K562 (cell line): ENCODE measurements at regions of chr12 and their contacts with region 1.

Region 1: GRCh38 chr12:28130625-28131598 is 59.3 kb upstream of the CCDC91 start:
- DNase-seq: peak; percentile 53 to 96 (median 70)
- ATAC-seq: peak; percentile 95
- H3K4me3 ChIP-seq: no peak overlapping the region
- H3K27ac ChIP-seq: peak overlapping the region; percentile 90
- H3K4me1 ChIP-seq: peaks cover 12 to 66% of the 10 kb centered on the region in 2 experiments
- H3K27me3 ChIP-seq: no peaks in the 10 kb centered on the region
- CTCF ChIP-seq: peak in 1 of 3 experiments; percentile 17; a peak in 2 of 6 replicates
- EP300 ChIP-seq: peak; percentile 95
- POLR2A ChIP-seq: peak; percentile 63; the same call in 1 of the 2 replicates
- RAD21 ChIP-seq: peak; percentile 7 to 30; a peak in 2 of 4 replicates

Region 2: DNA sequence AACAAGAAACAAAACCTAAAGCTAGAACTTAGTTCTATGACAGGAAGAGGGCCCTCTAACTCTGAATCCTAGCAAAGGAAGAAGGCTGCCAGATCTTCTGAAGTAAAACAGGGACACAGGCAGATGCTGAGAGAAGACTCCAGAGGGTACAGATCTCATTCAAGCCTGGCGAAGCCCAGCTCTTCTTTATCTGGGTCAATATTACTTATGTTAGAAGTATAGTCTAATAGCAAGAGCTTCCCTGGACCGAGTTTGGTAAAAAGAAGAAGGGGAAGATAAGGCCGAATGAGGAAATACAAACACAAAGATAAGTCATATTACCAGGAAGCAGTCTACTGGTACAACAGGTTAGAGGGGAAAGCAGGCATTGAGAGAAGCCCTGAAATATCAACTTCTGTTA is 20.6 kb before region 1 on chr12:
- CTCF ChIA-PET with region 1: no interaction called
- POLR2A ChIA-PET with region 1: interaction called, 6 read pairs
- in situ Hi-C with region 1: no loop called
- intact Hi-C with region 1: loop called (anchors 1 kb)
- DNase-seq: peak in 2 of 4 experiments; percentile 45 to 65
- ATAC-seq: peak; percentile 96
- H3K4me3 ChIP-seq: no peak overlapping the region
- H3K27ac ChIP-seq: peak overlapping the region; percentile 67
- H3K4me1 ChIP-seq: peaks cover 0 to 6% of the 10 kb centered on the region in 2 experiments; a peak in 2 of 5 replicates
- H3K27me3 ChIP-seq: no peaks in the 10 kb centered on the region
- CTCF ChIP-seq: peak; percentile 28 to 45 (median 34); a peak in 3 of 6 replicates
- EP300 ChIP-seq: no peak
- POLR2A ChIP-seq: no peak
- RAD21 ChIP-seq: peak; percentile 43 to 68

Region 3: GRCh38 chr12:28172434-28173030 is 41.6 kb after region 1 on chr12:
- CTCF ChIA-PET with region 1: no interaction called
- POLR2A ChIA-PET with region 1: no interaction called
- in situ Hi-C with region 1: no loop called
- intact Hi-C with region 1: no loop called
- DNase-seq: peak; percentile 24 to 69 (median 46)
- ATAC-seq: peak; percentile 90
- H3K4me3 ChIP-seq: no peak overlapping the region
- H3K27ac ChIP-seq: no peak overlapping the region
- H3K4me1 ChIP-seq: no peaks in the 10 kb centered on the region
- H3K27me3 ChIP-seq: no peaks in the 10 kb centered on the region
- CTCF ChIP-seq: peak; percentile 70 to 80 (median 73)
- EP300 ChIP-seq: no peak; the same call in 1 of the 2 replicates
- POLR2A ChIP-seq: no peak
- RAD21 ChIP-seq: peak; percentile 90 to 94

Region 4: GRCh38 chr12:28232211-28232928 is 101.5 kb after region 1 on chr12:
- CTCF ChIA-PET with region 1: no interaction called
- POLR2A ChIA-PET with region 1: no interaction called
- in situ Hi-C with region 1: no loop called
- intact Hi-C with region 1: no loop called
- DNase-seq: no peak
- ATAC-seq: no peak
- H3K4me3 ChIP-seq: no peak overlapping the region
- H3K27ac ChIP-seq: no peak overlapping the region
- H3K4me1 ChIP-seq: peaks cover 0 to 20% of the 10 kb centered on the region in 2 experiments; a peak in 2 of 5 replicates
- H3K27me3 ChIP-seq: no peaks in the 10 kb centered on the region
- CTCF ChIP-seq: no peak
- EP300 ChIP-seq: no peak
- POLR2A ChIP-seq: no peak
- RAD21 ChIP-seq: no peak

Region 5: GRCh38 chr12:28242496-28243309 is 111.8 kb after region 1 on chr12:
- CTCF ChIA-PET with region 1: no interaction called
- POLR2A ChIA-PET with region 1: no interaction called
- in situ Hi-C with region 1: no loop called
- intact Hi-C with region 1: loop called (anchors 5 kb)
- DNase-seq: peak; percentile 58 to 95 (median 70)
- ATAC-seq: peak; percentile 95
- H3K4me3 ChIP-seq: peak overlapping the region; percentile 31
- H3K27ac ChIP-seq: peak overlapping the region; percentile 96
- H3K4me1 ChIP-seq: peaks cover 10 to 22% of the 10 kb centered on the region in 2 experiments; a peak in 3 of 5 replicates
- H3K27me3 ChIP-seq: no peaks in the 10 kb centered on the region
- CTCF ChIP-seq: peak in 1 of 3 experiments; percentile 0; a peak in 1 of 6 replicates
- EP300 ChIP-seq: peak; percentile 92
- POLR2A ChIP-seq: no peak
- RAD21 ChIP-seq: peak in 1 of 2 experiments; percentile 1; a peak in 2 of 4 replicates